HAP-1 (cell line): ENCODE measurements at regions of chr2 and their contacts with region 1.

Region 1: GRCh38 chr2:186641807-186642321 is 52.0 kb upstream of the FAM171B start:
- DNase-seq: peak; percentile 48 to 68
- H3K4me3 ChIP-seq: no peak overlapping the region
- H3K4me1 ChIP-seq: no peaks in the 10 kb centered on the region
- H3K27me3 ChIP-seq: no peaks in the 10 kb centered on the region

Region 2: DNA sequence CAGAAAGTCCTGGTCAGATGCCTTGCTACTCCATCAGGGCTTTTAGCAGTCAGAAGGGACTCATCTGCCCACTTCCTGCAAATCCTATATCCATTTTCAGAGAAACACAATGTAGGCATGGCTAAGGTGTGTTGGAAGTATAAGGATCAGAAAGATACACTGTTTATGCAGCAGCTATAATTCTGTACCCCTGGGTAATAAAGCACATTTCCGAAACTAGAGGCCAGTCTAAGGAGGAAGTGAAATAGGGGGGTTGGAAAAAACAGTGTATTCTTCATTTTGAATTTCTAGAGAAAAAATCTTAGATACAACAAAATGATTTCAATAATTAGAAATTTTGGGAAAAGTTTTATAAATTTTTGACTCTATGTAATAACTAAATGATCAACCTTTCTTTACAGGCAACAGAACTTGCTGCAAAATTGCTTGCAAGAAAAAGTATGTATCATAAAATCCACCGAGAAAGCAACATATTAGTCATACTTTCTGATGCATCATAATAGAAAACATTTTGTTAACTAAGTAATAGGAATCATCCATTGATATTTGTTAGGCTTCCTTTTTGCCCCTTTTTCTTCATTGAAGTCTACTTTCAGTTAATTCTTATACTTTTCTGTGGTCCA is 855.9 kb before region 1 on chr2:
- in situ Hi-C with region 1: no loop called
- DNase-seq: no peak
- H3K4me3 ChIP-seq: no peak overlapping the region
- H3K4me1 ChIP-seq: no peaks in the 10 kb centered on the region
- H3K27me3 ChIP-seq: no peaks in the 10 kb centered on the region

Region 3: DNA sequence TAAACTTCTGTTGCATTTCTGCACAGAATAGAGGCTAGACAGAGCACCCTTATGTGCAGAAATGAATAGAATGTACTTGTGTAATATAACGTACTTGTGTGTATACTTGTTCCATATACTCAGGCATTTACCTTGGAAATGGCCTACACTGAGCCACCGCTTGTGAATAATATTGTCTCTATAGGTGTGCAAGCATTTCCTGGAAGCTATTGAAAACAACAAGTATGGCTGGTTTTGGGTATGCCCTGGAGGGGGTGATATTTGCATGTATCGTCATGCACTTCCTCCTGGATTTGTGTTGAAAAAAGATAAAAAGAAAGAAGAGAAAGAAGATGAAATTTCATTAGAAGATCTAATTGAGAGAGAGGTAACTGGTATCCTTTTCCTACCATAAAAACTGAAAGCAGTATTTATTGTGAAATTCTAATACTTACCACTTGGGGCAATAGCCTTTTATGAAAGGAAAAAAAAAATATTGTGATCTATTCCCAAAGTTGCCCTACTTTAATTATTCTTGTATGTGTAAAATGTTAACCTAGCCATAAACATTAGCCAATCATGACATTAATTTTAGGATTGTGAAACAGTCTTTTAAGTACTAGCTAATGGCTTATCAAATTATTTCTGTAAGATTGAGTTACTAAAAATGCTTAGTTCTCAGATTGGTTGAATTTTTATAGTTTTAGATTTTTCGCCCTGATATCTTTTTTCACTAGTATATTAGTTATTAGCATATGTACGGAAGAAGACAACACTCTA is 137.8 kb before region 1 on chr2:
- in situ Hi-C with region 1: loop called (anchors 10 kb)
- DNase-seq: peak in 1 of 2 experiments; percentile 65
- H3K4me3 ChIP-seq: no peak overlapping the region
- H3K4me1 ChIP-seq: peaks cover 2% of the 10 kb centered on the region; the same call in 1 of the 2 replicates
- H3K27me3 ChIP-seq: no peaks in the 10 kb centered on the region

Region 4: GRCh38 chr2:186968277-186968676 is 326.4 kb after region 1 on chr2:
- in situ Hi-C with region 1: no loop called
- DNase-seq: no peak
- H3K4me3 ChIP-seq: no peak overlapping the region
- H3K4me1 ChIP-seq: no peaks in the 10 kb centered on the region
- H3K27me3 ChIP-seq: no peaks in the 10 kb centered on the region

Region 5: DNA sequence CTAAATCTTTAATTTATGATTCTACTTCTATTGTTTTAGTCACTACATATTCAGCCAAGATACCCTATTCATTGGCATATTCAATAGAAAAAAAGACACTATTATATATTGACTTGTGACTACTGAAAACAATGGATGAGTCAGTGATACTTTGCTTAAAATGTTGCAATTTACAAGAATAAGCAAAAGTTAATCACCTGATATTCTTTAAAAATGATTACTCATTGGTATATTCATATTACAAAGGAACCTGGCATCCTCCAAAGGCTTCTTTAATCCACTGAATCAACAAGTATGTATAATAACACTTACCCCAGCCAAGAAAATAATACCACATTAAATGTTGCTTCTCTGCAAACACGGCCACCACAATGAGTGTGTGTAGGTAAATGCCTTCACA is 718.4 kb after region 1 on chr2:
- in situ Hi-C with region 1: no loop called
- DNase-seq: no peak
- H3K4me3 ChIP-seq: no peak overlapping the region
- H3K4me1 ChIP-seq: no peaks in the 10 kb centered on the region
- H3K27me3 ChIP-seq: no peaks in the 10 kb centered on the region